ENCODE measurements at regions of chr11 and their contacts with region 1.

Region 1: GRCh38 chr11:133082851-133083488 is 449.3 kb downstream of the OPCML start:
- DNase-seq: peak; percentile 31 to 81 (median 72)
- ATAC-seq: peak; percentile 97
- H3K4me3 ChIP-seq: no peak overlapping the region
- H3K27ac ChIP-seq: no peak overlapping the region
- H3K4me1 ChIP-seq: peaks cover 0 to 9% of the 10 kb centered on the region in 2 experiments; a peak in 2 of 5 replicates
- H3K27me3 ChIP-seq: no peaks in the 10 kb centered on the region
- CTCF ChIP-seq: peak in 2 of 3 experiments; percentile 76 to 97; a peak in 5 of 6 replicates
- EP300 ChIP-seq: no peak
- POLR2A ChIP-seq: no peak
- RAD21 ChIP-seq: peak in 1 of 2 experiments; percentile 62; a peak in 3 of 4 replicates

Region 2: DNA sequence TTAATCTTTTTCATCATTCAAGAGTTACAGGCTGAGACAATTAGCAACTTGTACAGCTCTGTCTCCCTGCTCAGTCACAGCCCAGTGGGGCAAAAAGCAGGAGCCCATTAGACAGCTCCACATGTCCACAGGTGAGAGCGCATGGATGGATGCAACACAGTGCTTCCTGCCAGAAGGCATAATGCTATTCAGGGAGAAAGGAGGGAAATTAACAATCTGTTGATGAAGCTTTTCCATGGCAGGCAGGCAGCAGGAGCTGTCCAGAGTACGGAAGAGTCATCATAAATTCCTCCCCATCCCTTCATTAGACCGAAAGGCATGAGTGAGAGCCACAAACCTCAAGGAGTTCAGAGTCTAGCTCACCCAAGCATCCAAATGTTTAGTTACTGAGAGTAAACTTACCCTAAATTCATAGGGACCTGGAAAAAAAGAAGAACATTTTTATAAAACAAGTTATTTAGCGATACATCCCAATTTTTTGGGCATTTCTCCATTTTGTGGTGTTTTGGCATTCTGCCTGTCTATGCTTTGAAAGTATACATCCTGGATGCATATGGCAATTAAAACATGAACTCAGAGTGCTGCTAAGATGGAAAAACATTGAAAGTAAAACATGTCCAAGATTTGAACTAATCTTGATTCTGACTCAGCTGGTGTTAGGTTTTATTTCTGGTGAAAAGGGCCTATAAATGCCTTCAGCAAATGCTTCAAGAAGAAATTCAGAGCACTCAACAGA is 21.2 kb after region 1 on chr11:
- CTCF ChIA-PET with region 1: no interaction called
- POLR2A ChIA-PET with region 1: no interaction called
- in situ Hi-C with region 1: no loop called
- intact Hi-C with region 1: no loop called
- DNase-seq: no peak
- ATAC-seq: no peak
- H3K4me3 ChIP-seq: no peak overlapping the region
- H3K27ac ChIP-seq: no peak overlapping the region
- H3K4me1 ChIP-seq: no peaks in the 10 kb centered on the region
- H3K27me3 ChIP-seq: no peaks in the 10 kb centered on the region
- CTCF ChIP-seq: no peak
- EP300 ChIP-seq: no peak
- POLR2A ChIP-seq: no peak
- RAD21 ChIP-seq: no peak

Region 3: GRCh38 chr11:133163463-133164419 is 80.8 kb after region 1 on chr11:
- CTCF ChIA-PET with region 1: no interaction called
- POLR2A ChIA-PET with region 1: no interaction called
- in situ Hi-C with region 1: no loop called
- intact Hi-C with region 1: loop called (anchors 2 kb)
- DNase-seq: peak; percentile 16 to 42 (median 19)
- ATAC-seq: peak; percentile 79
- H3K4me3 ChIP-seq: no peak overlapping the region
- H3K27ac ChIP-seq: no peak overlapping the region
- H3K4me1 ChIP-seq: no peaks in the 10 kb centered on the region
- H3K27me3 ChIP-seq: no peaks in the 10 kb centered on the region
- CTCF ChIP-seq: peak; percentile 25 to 49 (median 43); a peak in 4 of 6 replicates
- EP300 ChIP-seq: no peak
- POLR2A ChIP-seq: no peak
- RAD21 ChIP-seq: peak in 1 of 2 experiments; percentile 34; a peak in 2 of 4 replicates

Region 4: GRCh38 chr11:133821776-133822175 is 738.8 kb after region 1 on chr11:
- CTCF ChIA-PET with region 1: no interaction called
- POLR2A ChIA-PET with region 1: no interaction called
- in situ Hi-C with region 1: loop called (anchors 10 kb)
- intact Hi-C with region 1: loop called (anchors 5 kb)
- DNase-seq: peak; percentile 53 to 64 (median 55)
- ATAC-seq: peak; percentile 89
- H3K4me3 ChIP-seq: no peak overlapping the region
- H3K27ac ChIP-seq: no peak overlapping the region
- H3K4me1 ChIP-seq: no peaks in the 10 kb centered on the region
- H3K27me3 ChIP-seq: no peaks in the 10 kb centered on the region
- CTCF ChIP-seq: peak; percentile 54 to 63 (median 58)
- EP300 ChIP-seq: no peak
- POLR2A ChIP-seq: no peak
- RAD21 ChIP-seq: peak; percentile 28 to 57; a peak in 3 of 4 replicates

Region 5: GRCh38 chr11:133834682-133835592 is 752.0 kb after region 1 on chr11:
- CTCF ChIA-PET with region 1: no interaction called
- POLR2A ChIA-PET with region 1: no interaction called
- in situ Hi-C with region 1: no loop called
- intact Hi-C with region 1: loop called (anchors 2 kb)
- DNase-seq: peak in 2 of 4 experiments; percentile 22 to 46
- ATAC-seq: peak; percentile 86
- H3K4me3 ChIP-seq: no peak overlapping the region
- H3K27ac ChIP-seq: no peak overlapping the region
- H3K4me1 ChIP-seq: no peaks in the 10 kb centered on the region
- H3K27me3 ChIP-seq: no peaks in the 10 kb centered on the region
- CTCF ChIP-seq: peak; percentile 39 to 55 (median 54)
- EP300 ChIP-seq: no peak
- POLR2A ChIP-seq: no peak
- RAD21 ChIP-seq: peak; percentile 26 to 63; a peak in 2 of 4 replicates

Region 6: GRCh38 chr11:133927690-133928627 is 845.0 kb after region 1 on chr11:
- CTCF ChIA-PET with region 1: no interaction called
- POLR2A ChIA-PET with region 1: no interaction called
- in situ Hi-C with region 1: no loop called
- intact Hi-C with region 1: loop called (anchors 10 kb)
- DNase-seq: peak; percentile 58 to 75 (median 72)
- ATAC-seq: peak; percentile 89
- H3K4me3 ChIP-seq: no peak overlapping the region
- H3K27ac ChIP-seq: no peak overlapping the region
- H3K4me1 ChIP-seq: peaks cover 0 to 17% of the 10 kb centered on the region in 2 experiments; a peak in 2 of 5 replicates
- H3K27me3 ChIP-seq: peaks cover 4 to 59% of the 10 kb centered on the region in 2 experiments; a peak in 3 of 5 replicates
- CTCF ChIP-seq: peak; percentile 66 to 85 (median 73)
- EP300 ChIP-seq: no peak
- POLR2A ChIP-seq: no peak
- RAD21 ChIP-seq: peak; percentile 55 to 79

Region 7: GRCh38 chr11:134050541-134051383 is 967.8 kb after region 1 on chr11:
- CTCF ChIA-PET with region 1: no interaction called
- POLR2A ChIA-PET with region 1: no interaction called
- in situ Hi-C with region 1: no loop called
- intact Hi-C with region 1: loop called (anchors 5 kb)
- DNase-seq: peak; percentile 76 to 91 (median 90)
- ATAC-seq: peak; percentile 98
- H3K4me3 ChIP-seq: no peak overlapping the region
- H3K27ac ChIP-seq: no peak overlapping the region
- H3K4me1 ChIP-seq: peaks cover 0 to 10% of the 10 kb centered on the region in 2 experiments; a peak in 3 of 5 replicates
- H3K27me3 ChIP-seq: peaks cover 6 to 49% of the 10 kb centered on the region in 2 experiments
- CTCF ChIP-seq: peak; percentile 86 to 94 (median 89)
- EP300 ChIP-seq: no peak
- POLR2A ChIP-seq: no peak
- RAD21 ChIP-seq: peak; percentile 55 to 82

Region 8: DNA sequence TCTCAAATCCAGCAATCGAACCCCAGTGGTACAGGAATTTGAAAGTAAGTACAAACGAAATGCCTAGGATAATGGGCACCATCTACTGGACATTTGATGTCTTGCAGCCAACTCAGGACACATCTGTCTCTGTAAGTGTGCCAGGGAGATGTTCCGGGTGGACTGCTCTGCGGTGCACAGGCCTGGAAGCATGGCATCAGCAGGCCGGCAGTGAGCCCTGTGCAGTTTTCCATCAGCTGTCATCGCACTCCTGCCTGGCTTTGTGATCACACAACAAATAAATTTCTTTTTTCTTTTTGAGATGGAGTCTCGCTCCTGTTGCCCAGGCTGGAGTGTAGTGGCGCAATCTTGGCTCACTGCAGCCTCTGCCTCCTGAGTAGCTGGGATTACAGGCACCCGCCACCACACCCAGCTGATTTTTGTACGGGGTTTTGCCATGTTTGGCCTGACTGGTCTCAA is 1056.9 kb after region 1 on chr11:
- CTCF ChIA-PET with region 1: interaction called, 3 read pairs
- POLR2A ChIA-PET with region 1: no interaction called
- in situ Hi-C with region 1: no loop called
- intact Hi-C with region 1: loop called (anchors 5 kb)
- DNase-seq: peak; percentile 35 to 62 (median 44)
- ATAC-seq: peak; percentile 97
- H3K4me3 ChIP-seq: no peak overlapping the region
- H3K27ac ChIP-seq: no peak overlapping the region
- H3K4me1 ChIP-seq: no peaks in the 10 kb centered on the region
- H3K27me3 ChIP-seq: peaks cover 0 to 15% of the 10 kb centered on the region in 2 experiments; a peak in 3 of 5 replicates
- CTCF ChIP-seq: peak; percentile 60 to 77 (median 72)
- EP300 ChIP-seq: no peak
- POLR2A ChIP-seq: no peak
- RAD21 ChIP-seq: peak; percentile 63 to 70

Measured in K562 (cell line).